ENCODE measurements at regions of chr14 and their contacts with region 1.

Region 1: GRCh38 chr14:35416108-35416750 is 11.7 kb upstream of the NFKBIA start:
- DNase-seq: peak; percentile 72
- H3K4me3 Mint-ChIP-seq: peak overlapping the region; percentile 79
- H3K27ac Mint-ChIP-seq: peak overlapping the region; percentile 98
- H3K4me1 Mint-ChIP-seq: peaks cover 64% of the 10 kb centered on the region
- H3K27me3 Mint-ChIP-seq: peaks cover 2% of the 10 kb centered on the region

Region 2: DNA sequence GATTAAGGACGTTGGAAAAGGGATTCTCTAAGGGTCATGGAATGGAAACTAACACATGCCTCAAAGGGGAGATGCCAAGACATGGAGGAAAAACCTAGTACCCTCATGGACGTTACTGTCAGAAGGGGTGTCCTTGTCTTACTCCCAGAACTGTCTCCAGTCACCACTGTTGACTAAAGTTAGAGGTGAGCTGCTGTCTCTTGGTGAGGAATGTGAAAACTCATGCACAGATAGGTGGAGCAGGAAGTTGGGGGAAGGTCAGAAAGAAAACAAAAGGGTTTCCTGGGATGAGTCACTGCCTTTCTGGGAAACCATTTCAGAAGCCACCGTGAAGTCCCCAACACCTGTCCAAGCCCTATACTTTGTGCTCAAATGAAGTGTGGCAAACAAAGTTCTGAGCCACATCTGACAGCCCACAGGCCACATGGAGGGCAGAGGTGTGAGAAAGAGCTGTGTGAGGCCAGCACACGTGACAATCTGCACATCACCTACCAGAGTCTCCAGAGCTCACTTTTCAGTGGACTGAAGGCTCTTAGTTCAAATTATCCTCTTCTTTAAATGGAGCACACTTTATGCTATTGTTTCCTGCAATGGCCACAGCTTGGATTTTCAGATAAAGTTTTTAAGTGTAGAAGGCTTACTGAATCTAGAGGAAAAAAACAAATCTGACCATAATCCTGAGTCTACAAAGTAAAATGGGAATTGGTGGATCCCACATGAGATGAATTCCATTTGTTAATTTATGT is 1372.4 kb before region 1 on chr14:
- intact Hi-C with region 1: loop called (anchors 10 kb)
- DNase-seq: peak; percentile 91
- H3K4me3 Mint-ChIP-seq: peak overlapping the region; percentile 71
- H3K27ac Mint-ChIP-seq: peak overlapping the region; percentile 87
- H3K4me1 Mint-ChIP-seq: peaks cover 70% of the 10 kb centered on the region
- H3K27me3 Mint-ChIP-seq: no peaks in the 10 kb centered on the region

Region 3: GRCh38 chr14:34714320-34715126 is 701.7 kb before region 1 on chr14 and contains the start of gene CFL2:
- intact Hi-C with region 1: loop called (anchors 1 kb)
- DNase-seq: peak; percentile 51
- H3K4me3 Mint-ChIP-seq: peak within 1 kb of the TSS; percentile 95
- H3K27ac Mint-ChIP-seq: peak within 1 kb of the TSS; percentile 95
- H3K4me1 Mint-ChIP-seq: peaks cover 33% of the 10 kb centered on the region
- H3K27me3 Mint-ChIP-seq: peaks cover 9% of the 10 kb centered on the region
- total RNA-seq, gene CFL2: 8.3 and 9.2 TPM in 2 replicates

Region 4: GRCh38 chr14:35046048-35046741 is 370.0 kb before region 1 on chr14 and contains the start of gene FAM177A1:
- intact Hi-C with region 1: loop called (anchors 1 kb)
- DNase-seq: peak; percentile 96
- H3K4me3 Mint-ChIP-seq: peak within 1 kb of the TSS; percentile 97
- H3K27ac Mint-ChIP-seq: peak within 1 kb of the TSS; percentile 99
- H3K4me1 Mint-ChIP-seq: peaks cover 32% of the 10 kb centered on the region
- H3K27me3 Mint-ChIP-seq: no peaks in the 10 kb centered on the region
- total RNA-seq, gene FAM177A1: 43.2 and 46.3 TPM in 2 replicates

Region 5: GRCh38 chr14:35159742-35160409 is 256.4 kb before region 1 on chr14:
- intact Hi-C with region 1: loop called (anchors 1 kb)
- DNase-seq: no peak
- H3K4me3 Mint-ChIP-seq: peak overlapping the region; percentile 5
- H3K27ac Mint-ChIP-seq: peak overlapping the region; percentile 81
- H3K4me1 Mint-ChIP-seq: peaks cover 67% of the 10 kb centered on the region
- H3K27me3 Mint-ChIP-seq: no peaks in the 10 kb centered on the region

Region 6: DNA sequence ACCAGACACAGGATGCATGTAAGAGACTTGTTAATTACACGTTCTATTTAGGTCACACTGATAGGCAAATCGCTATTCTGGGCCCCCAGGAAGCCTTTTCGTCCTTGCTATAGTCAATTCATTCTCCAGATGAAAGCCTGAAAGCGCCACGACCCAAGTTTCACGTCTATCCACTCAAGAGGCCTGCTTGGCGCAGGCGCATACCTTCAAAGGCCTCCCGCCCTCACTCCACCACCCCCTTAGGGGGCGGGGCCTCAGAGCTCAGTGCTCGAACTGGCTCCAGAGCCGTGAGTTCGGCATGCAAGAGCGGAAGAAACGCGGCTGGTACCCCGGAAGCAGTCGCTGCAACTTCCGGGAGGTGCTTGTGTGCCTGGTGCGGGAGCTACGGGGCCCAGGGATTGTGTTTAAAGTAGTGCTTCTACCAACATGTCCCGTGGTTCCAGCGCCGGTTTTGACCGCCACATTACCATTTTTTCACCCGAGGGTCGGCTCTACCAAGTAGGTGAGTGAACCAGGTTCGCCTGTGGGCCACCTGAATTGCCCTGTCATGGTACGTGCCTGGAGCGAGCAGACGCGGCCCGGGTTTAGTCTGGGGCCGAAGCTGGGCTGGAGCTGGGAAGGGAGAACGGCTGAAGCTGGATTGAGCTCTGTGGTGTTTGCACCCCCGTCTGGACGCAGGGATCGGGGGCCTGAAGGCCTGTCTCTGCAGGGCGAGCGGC is 124.0 kb before region 1 on chr14 and contains the start of gene PSMA6:
- intact Hi-C with region 1: loop called (anchors 1 kb)
- DNase-seq: peak; percentile 99
- H3K4me3 Mint-ChIP-seq: peak within 1 kb of the TSS; percentile 99
- H3K27ac Mint-ChIP-seq: peak within 1 kb of the TSS; percentile 94
- H3K4me1 Mint-ChIP-seq: peaks cover 56% of the 10 kb centered on the region
- H3K27me3 Mint-ChIP-seq: no peaks in the 10 kb centered on the region
- total RNA-seq, gene PSMA6: 475 and 479 TPM in 2 replicates

Region 7: GRCh38 chr14:35355981-35356841 is 60.0 kb before region 1 on chr14:
- intact Hi-C with region 1: no loop called
- DNase-seq: no peak
- H3K4me3 Mint-ChIP-seq: no peak overlapping the region
- H3K27ac Mint-ChIP-seq: peak overlapping the region; percentile 33
- H3K4me1 Mint-ChIP-seq: peaks cover 16% of the 10 kb centered on the region
- H3K27me3 Mint-ChIP-seq: no peaks in the 10 kb centered on the region

Region 8: GRCh38 chr14:35482994-35483515 is 66.8 kb after region 1 on chr14:
- intact Hi-C with region 1: no loop called
- DNase-seq: no peak
- H3K4me3 Mint-ChIP-seq: no peak overlapping the region
- H3K27ac Mint-ChIP-seq: no peak overlapping the region
- H3K4me1 Mint-ChIP-seq: no peaks in the 10 kb centered on the region
- H3K27me3 Mint-ChIP-seq: peaks cover 2% of the 10 kb centered on the region

Region 9: DNA sequence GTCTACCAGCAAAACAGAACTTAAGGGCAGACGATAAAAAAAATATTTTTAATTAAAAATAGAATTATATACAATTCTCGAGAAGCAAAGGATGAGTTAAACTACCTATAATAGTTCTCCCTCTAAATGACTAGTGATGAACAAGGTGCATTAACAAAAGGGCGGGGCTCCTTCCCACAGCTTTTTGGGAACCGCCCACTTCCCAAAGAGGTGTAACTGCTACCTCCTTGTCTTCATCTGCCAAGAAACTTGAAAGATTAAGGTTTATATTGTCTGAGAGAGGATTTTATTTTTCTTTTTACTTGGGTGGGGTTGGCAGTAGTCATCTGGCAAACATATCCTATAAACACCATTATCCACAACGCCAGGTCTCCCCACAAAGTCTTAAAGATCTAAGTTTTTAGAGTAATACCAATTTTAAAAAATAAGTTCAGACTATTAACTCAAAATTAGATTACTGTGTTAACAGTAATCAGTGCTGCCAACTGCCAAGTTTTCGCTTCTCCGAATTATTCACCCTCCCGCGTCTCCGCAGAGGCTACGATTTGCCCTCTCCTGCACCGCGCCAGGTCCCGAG is 391.9 kb after region 1 on chr14:
- intact Hi-C with region 1: loop called (anchors 5 kb)
- DNase-seq: no peak
- H3K4me3 Mint-ChIP-seq: peak overlapping the region; percentile 100
- H3K27ac Mint-ChIP-seq: peak overlapping the region; percentile 97
- H3K4me1 Mint-ChIP-seq: peaks cover 29% of the 10 kb centered on the region
- H3K27me3 Mint-ChIP-seq: peaks cover 3% of the 10 kb centered on the region

Region 10: DNA sequence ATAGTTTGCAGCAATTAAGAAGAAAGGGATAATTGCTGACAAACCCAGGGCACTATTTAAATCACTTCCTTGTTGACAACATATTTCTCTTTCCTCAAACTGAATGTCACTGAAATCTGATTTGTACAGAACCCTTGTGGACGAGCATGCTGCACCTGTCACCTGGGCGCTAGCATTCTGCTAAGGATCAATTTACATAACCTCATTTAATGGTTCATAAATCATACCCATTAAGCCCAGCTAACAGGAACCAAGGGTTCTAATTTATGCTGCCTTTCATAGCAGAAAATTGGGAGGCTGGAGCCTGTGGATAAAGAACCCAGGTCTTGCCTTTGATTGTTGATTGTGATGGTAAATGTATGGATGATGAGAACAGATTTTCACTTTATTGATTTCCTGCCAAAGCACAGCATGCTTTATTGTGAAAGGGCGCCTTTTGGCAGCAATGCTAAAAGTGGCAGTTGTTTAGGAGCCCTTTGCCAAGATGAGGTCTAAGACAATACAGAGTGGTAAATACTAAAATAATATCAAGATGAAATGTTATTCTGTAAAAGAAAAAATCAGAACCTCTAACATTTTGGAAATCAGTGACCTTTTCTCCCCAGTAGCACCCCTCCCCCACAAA is 1008.4 kb after region 1 on chr14:
- intact Hi-C with region 1: no loop called
- DNase-seq: no peak
- H3K4me3 Mint-ChIP-seq: no peak overlapping the region
- H3K27ac Mint-ChIP-seq: no peak overlapping the region
- H3K4me1 Mint-ChIP-seq: no peaks in the 10 kb centered on the region
- H3K27me3 Mint-ChIP-seq: no peaks in the 10 kb centered on the region

Measured in activated T-helper 1 cell treated with anti-CD3 and anti-CD28 coated beads, Interleukin-12 subunit alpha, Interleukin-12 subunit beta, Interleukin-2, Interleukin-4 antibody, amounts not matched to agents 30 ng/mL and 10 ng/mL and 1 ng/mL, durations not matched to agents 14 hours and 24 hours and 36 hours (primary cell).